Activated B cell treated with CpG ODN at 0.5 μM for 24 hours (primary cell): ENCODE measurements at regions of chr1 and their contacts with region 1.

Region 1: DNA sequence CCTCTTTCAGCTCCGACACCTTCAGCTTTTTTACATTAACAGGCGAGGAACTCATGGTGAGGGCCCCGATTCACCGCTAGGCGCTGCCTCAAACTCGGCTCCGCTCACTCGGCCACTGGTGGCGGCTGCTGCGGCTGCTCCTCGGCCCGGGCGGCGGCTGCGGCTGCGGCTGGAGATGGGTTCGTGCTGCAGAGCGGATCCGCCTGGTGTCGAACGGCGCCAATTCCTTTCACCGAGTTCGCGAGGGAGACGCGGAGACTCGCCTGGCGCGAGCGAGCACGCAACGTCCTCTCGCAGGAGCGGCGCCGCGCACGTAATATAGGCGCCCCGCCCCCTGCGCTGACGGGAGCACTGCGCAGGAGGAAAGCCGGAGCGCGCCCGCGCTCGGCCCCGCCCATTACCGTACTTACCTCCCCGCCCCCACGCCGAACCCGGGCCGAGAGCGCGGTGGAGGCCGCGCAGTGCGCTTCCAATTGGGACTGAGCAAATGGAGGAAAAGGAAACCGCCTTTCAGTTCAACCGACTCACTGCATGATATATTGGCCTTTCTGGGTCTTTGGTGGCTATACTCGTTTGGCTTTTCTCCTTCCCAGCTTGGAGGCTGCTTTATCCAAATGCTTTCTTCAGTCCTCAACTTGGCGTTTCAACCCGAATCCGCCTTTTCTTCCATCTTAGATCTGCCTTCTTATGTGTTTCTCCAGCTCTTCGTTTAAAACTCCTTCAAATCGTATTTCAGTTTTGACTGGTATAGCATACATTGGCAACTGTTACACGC is at the start of gene HNRNPU:
- DNase-seq: peak; percentile 99
- ATAC-seq: peak; percentile 74
- H3K4me3 Mint-ChIP-seq: peak within 1 kb of the TSS; percentile 90
- H3K27ac Mint-ChIP-seq: peak within 1 kb of the TSS; percentile 98
- H3K4me1 Mint-ChIP-seq: peaks cover 38% of the 10 kb centered on the region
- H3K27me3 Mint-ChIP-seq: no peaks in the 10 kb centered on the region
- CTCF ChIP-seq: no peak
- total RNA-seq, gene HNRNPU: 424 and 428 TPM in 2 replicates

Region 2: GRCh38 chr1:244451951-244452795 is 412.3 kb before region 1 on chr1:
- CTCF ChIA-PET with region 1: no interaction called
- POLR2A ChIA-PET with region 1: interaction called, 4 read pairs
- intact Hi-C with region 1: loop called (anchors 1 kb)
- DNase-seq: peak; percentile 97
- ATAC-seq: peak; percentile 94
- H3K4me3 Mint-ChIP-seq: peak overlapping the region; percentile 95
- H3K27ac Mint-ChIP-seq: peak overlapping the region; percentile 78
- H3K4me1 Mint-ChIP-seq: peaks cover 32% of the 10 kb centered on the region
- H3K27me3 Mint-ChIP-seq: no peaks in the 10 kb centered on the region
- CTCF ChIP-seq: no peak

Region 3: DNA sequence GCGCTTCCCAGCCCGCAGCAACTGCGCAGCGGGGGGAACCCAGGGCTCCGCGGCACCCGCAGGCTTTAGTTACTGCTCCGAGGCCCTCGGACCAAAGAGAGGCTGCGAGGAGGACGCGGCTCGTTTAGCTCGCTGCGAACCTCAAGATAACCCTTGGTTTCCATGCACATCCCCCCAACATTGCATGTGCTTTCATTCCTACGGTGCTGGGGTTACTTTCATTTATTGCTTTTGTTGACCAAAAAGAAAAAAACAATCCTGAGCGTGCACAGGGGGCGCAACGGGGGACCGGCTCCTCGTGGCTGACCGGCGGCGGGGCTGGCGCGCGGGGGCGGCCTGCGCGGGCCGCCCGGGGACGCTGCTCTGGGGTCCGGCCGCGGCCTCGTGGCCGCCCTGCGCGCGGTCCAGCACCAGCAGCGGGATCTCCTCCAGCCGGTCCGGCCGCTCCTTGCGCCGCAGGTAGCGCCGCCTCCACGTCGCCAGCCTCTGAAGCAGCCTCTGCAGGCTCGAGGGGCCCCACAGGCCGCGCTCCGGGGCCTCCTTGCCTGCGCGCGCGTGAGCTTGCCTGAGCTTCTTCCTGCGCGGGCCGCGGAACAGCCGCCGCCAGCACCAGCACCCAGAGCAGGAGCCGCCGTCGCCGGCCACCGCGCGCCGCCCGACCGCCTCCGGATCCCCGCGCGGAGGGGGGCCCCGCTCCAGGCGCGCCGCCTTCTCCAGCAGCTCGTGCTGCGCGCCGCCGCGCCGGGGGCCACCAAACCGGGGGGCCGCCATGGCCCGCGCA is 134.1 kb before region 1 on chr1:
- CTCF ChIA-PET with region 1: no interaction called
- POLR2A ChIA-PET with region 1: interaction called, 3 read pairs
- intact Hi-C with region 1: loop called (anchors 2 kb)
- DNase-seq: peak; percentile 48
- ATAC-seq: peak; percentile 46
- H3K4me3 Mint-ChIP-seq: peak overlapping the region; percentile 87
- H3K27ac Mint-ChIP-seq: peak overlapping the region; percentile 83
- H3K4me1 Mint-ChIP-seq: peaks cover 23% of the 10 kb centered on the region
- H3K27me3 Mint-ChIP-seq: no peaks in the 10 kb centered on the region
- CTCF ChIP-seq: no peak

Region 4: DNA sequence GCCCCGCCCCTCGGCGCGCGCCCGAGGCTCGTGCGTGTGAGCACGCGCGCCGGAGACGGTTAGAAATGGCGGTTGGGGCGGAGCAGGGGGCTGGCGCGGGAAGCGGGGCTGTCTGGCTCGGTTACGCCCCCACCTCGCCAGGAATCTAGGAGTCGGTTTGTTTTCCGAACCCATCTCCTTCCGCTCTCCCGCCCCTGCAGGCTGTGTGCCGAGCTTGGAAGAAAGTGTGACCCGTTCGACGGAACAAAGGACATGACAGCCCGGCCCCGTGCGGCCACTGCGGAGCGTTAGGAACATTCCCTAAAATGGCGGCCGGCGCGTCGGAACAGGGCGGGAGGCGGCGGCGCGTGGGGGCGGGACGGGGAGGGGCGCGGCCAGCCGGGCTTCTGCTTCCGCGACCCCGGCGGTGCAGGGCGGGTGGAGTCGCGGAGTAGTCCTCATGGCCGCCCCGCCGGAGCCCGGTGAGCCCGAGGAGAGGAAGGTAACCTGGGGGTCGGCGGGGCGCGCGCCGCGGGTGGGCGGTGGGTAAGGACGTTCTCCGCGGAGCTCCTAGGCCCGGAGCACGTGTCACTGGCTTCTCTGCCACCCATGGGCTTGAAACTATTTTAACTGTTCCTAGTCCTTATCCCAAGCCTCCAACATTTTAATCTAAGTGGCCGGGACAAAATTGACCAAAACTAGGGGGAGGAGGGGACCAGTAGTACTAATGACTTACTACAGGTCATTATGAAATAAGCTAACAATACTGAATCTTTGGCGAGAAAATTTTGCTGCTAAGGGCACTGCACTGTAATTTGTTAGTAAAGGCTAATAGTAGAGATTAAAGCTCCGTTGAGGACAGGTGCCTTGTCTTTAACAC is 28.9 kb before region 1 on chr1 and contains the start of gene COX20:
- CTCF ChIA-PET with region 1: interaction called, 34 read pairs
- POLR2A ChIA-PET with region 1: interaction called, 364 read pairs
- intact Hi-C with region 1: loop called (anchors 1 kb)
- DNase-seq: peak; percentile 95
- ATAC-seq: peak; percentile 66
- H3K4me3 Mint-ChIP-seq: peak within 1 kb of the TSS; percentile 97
- H3K27ac Mint-ChIP-seq: peak within 1 kb of the TSS; percentile 99
- H3K4me1 Mint-ChIP-seq: peaks cover 56% of the 10 kb centered on the region
- H3K27me3 Mint-ChIP-seq: no peaks in the 10 kb centered on the region
- CTCF ChIP-seq: no peak
- total RNA-seq, gene COX20: 37.1 and 37.6 TPM in 2 replicates

Region 5: DNA sequence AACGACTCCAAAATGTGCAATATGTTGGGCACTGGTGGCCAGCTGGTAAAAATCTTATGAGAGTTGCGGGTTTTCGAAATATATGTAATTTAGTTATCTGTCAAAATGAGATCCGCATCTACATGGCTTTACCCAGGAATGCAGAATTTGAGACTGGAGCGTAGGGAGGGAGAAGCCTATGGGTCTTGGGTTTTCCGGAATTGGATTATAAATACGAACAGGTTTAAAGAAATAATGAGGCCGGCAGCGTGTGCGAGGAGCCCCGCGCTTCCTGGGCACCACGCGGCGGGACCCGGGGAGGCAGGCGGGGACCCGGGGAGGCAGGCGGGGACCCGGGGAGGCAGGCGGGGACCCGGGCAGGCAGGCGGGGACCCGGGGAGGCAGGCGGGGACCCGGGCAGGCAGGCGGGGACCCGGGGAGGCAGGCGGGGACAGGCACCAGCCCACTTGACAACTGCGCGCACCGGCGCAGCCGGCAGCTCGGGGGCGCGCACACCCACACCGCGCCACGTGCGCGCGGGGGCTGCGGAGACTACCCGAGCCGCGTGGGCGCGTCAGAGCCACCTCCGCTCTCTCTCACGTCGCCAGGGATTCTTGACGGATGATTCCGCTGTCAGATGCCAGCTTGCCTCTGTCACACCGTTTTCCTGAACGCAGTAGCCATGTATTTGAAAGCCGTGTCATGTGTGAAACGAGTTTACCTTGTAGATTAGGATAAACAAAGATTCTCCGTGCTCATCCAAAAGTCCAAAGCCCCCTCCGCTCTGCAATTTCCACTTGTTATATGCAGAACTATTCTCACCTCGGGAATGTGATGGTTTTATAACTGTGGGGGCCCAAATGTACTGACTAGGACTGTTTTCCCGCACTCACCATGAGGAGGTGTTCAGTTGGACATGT is 54.2 kb after region 1 on chr1:
- CTCF ChIA-PET with region 1: no interaction called
- POLR2A ChIA-PET with region 1: interaction called, 19 read pairs
- intact Hi-C with region 1: loop called (anchors 2 kb)
- DNase-seq: peak; percentile 61
- ATAC-seq: peak; percentile 83
- H3K4me3 Mint-ChIP-seq: peak overlapping the region; percentile 89
- H3K27ac Mint-ChIP-seq: peak overlapping the region; percentile 66
- H3K4me1 Mint-ChIP-seq: peaks cover 26% of the 10 kb centered on the region
- H3K27me3 Mint-ChIP-seq: no peaks in the 10 kb centered on the region
- CTCF ChIP-seq: no peak

Region 6: DNA sequence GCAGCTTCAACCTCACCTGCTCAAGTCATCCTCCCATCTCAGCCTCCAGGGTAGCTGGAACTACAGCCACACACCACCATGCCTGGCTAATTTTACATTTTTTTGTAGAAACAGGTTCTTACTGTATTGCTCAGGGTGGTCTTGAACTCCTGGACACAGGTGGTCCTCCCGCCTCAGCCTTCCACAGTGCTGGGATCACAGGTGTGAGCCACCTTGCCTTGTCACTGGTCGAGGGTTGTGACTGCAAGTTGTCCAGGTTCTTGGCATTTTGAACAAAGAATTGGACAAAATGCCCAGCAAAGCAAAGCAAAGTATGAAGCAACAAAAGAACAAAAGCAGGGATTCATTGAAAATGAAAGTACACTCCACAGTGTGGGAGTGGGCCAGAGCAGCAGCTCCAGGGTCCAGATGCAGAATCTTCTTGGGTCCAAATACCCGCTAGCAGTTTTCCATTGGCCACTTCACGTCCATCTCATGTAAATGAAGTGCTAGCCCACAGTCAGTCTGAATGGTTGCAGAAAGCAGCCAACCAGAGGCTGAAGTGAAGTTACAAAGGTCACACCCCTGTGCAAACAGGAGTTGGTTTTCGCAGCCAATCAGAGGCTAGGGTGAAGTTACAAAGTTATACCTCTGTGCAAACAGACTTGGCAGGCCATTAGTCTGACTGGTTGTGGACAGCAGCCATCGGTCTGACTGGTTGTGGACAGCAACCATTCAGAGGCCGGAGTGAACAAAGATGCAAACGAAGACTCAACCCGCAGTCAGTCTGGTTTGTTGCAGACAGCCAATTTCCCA is 180.8 kb after region 1 on chr1:
- CTCF ChIA-PET with region 1: interaction called, 56 read pairs
- POLR2A ChIA-PET with region 1: interaction called, 35 read pairs
- intact Hi-C with region 1: loop called (anchors 1 kb)
- DNase-seq: no peak
- ATAC-seq: no peak
- H3K4me3 Mint-ChIP-seq: no peak overlapping the region
- H3K27ac Mint-ChIP-seq: no peak overlapping the region
- H3K4me1 Mint-ChIP-seq: no peaks in the 10 kb centered on the region
- H3K27me3 Mint-ChIP-seq: no peaks in the 10 kb centered on the region
- CTCF ChIP-seq: no peak